Dendritic cell treated with granulocyte-macrophage colony-stimulating factor and Interleukin-4, amounts not matched to agents 40 ng/mL and 50 ng/mL, for 4 days (primary cell): ENCODE measurements at regions of chr17 and their contacts with region 1.

Region 1: GRCh38 chr17:3213587-3213986 is 6.1 kb downstream of the OR1A1 start:
- H3K4me3 Mint-ChIP-seq: no peak overlapping the region
- H3K27ac Mint-ChIP-seq: no peak overlapping the region
- H3K4me1 Mint-ChIP-seq: no peaks in the 10 kb centered on the region
- H3K27me3 Mint-ChIP-seq: peaks cover 8% of the 10 kb centered on the region

Region 2: DNA sequence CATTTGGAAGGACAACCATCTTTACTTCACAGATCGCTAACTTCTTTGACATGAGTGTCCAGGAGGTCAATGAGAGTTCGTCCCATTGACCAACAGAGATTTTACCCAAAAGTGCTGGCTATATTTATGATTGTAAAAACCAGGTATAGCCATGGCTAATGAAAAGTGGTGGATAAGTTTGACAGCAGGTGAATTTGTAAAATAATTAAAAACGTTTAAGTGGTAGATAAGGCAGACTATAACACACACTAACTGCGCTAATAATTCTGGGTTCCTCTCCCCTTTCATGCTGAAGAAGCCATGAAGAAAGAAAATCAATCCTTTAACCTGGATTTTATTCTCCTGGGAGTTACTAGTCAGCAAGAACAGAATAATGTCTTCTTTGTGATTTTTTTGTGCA is 16.4 kb before region 1 on chr17 and contains the start of gene OR1A2:
- intact Hi-C with region 1: no loop called
- H3K4me3 Mint-ChIP-seq: no peak within 1 kb of the TSS
- H3K27ac Mint-ChIP-seq: no peak within 1 kb of the TSS
- H3K4me1 Mint-ChIP-seq: no peaks in the 10 kb centered on the region
- H3K27me3 Mint-ChIP-seq: peaks cover 7% of the 10 kb centered on the region

Region 3: GRCh38 chr17:3271072-3271848 is 57.7 kb after region 1 on chr17:
- intact Hi-C with region 1: loop called (anchors 5 kb)
- H3K4me3 Mint-ChIP-seq: no peak overlapping the region
- H3K27ac Mint-ChIP-seq: no peak overlapping the region
- H3K4me1 Mint-ChIP-seq: peaks cover 21% of the 10 kb centered on the region
- H3K27me3 Mint-ChIP-seq: peaks cover under 1% of the 10 kb centered on the region